K562 (cell line): ENCODE measurements at regions of chr12 and their contacts with region 1.

Region 1: GRCh38 chr12:110888256-110888991 is 32.0 kb downstream of the MYL2 start:
- DNase-seq: no peak
- ATAC-seq: no peak
- H3K4me3 ChIP-seq: no peak overlapping the region
- H3K27ac ChIP-seq: no peak overlapping the region
- H3K4me1 ChIP-seq: no peaks in the 10 kb centered on the region
- H3K27me3 ChIP-seq: peaks cover 3 to 18% of the 10 kb centered on the region in 2 experiments
- CTCF ChIP-seq: no peak
- EP300 ChIP-seq: no peak
- POLR2A ChIP-seq: no peak
- RAD21 ChIP-seq: no peak

Region 2: GRCh38 chr12:110449799-110450497 is 438.5 kb before region 1 on chr12 and contains the start of gene ARPC3:
- CTCF ChIA-PET with region 1: interaction called, 15 read pairs
- POLR2A ChIA-PET with region 1: no interaction called
- in situ Hi-C with region 1: no loop called
- intact Hi-C with region 1: loop called (anchors 5 kb)
- DNase-seq: peak; percentile 86 to 97 (median 89)
- ATAC-seq: peak; percentile 97
- H3K4me3 ChIP-seq: peak within 1 kb of the TSS; percentile 60
- H3K27ac ChIP-seq: peak within 1 kb of the TSS; percentile 82
- H3K4me1 ChIP-seq: peaks cover 6 to 13% of the 10 kb centered on the region in 2 experiments; a peak in 3 of 5 replicates
- H3K27me3 ChIP-seq: no peaks in the 10 kb centered on the region
- CTCF ChIP-seq: peak; percentile 94 to 97 (median 95)
- EP300 ChIP-seq: 0 out of 2 replicates have a peak, but pooled peaks have one; percentile 20
- POLR2A ChIP-seq: peak; percentile 94
- RAD21 ChIP-seq: peak; percentile 94 to 96
- polyA plus RNA-seq, gene ARPC3: 450 to 575 TPM

Region 3: GRCh38 chr12:110555577-110556406 is 332.6 kb before region 1 on chr12:
- CTCF ChIA-PET with region 1: interaction called, 4 read pairs
- POLR2A ChIA-PET with region 1: no interaction called
- in situ Hi-C with region 1: no loop called
- intact Hi-C with region 1: loop called (anchors 10 kb)
- DNase-seq: no peak
- ATAC-seq: no peak
- H3K4me3 ChIP-seq: no peak overlapping the region
- H3K27ac ChIP-seq: no peak overlapping the region
- H3K4me1 ChIP-seq: peaks cover 0 to 12% of the 10 kb centered on the region in 2 experiments; a peak in 3 of 5 replicates
- H3K27me3 ChIP-seq: no peaks in the 10 kb centered on the region
- CTCF ChIP-seq: no peak
- EP300 ChIP-seq: no peak
- POLR2A ChIP-seq: no peak
- RAD21 ChIP-seq: no peak